HEK293 (cell line): ENCODE measurements at regions of chr11 and their contacts with region 1.

Region 1: GRCh38 chr11:73350908-73351636 is 25.1 kb upstream of the RELT start:
- H3K4me3 ChIP-seq: no peak overlapping the region
- H3K27ac ChIP-seq: no peak overlapping the region
- H3K4me1 ChIP-seq: no peaks in the 10 kb centered on the region
- CTCF ChIP-seq: peak; percentile 60

Region 2: DNA sequence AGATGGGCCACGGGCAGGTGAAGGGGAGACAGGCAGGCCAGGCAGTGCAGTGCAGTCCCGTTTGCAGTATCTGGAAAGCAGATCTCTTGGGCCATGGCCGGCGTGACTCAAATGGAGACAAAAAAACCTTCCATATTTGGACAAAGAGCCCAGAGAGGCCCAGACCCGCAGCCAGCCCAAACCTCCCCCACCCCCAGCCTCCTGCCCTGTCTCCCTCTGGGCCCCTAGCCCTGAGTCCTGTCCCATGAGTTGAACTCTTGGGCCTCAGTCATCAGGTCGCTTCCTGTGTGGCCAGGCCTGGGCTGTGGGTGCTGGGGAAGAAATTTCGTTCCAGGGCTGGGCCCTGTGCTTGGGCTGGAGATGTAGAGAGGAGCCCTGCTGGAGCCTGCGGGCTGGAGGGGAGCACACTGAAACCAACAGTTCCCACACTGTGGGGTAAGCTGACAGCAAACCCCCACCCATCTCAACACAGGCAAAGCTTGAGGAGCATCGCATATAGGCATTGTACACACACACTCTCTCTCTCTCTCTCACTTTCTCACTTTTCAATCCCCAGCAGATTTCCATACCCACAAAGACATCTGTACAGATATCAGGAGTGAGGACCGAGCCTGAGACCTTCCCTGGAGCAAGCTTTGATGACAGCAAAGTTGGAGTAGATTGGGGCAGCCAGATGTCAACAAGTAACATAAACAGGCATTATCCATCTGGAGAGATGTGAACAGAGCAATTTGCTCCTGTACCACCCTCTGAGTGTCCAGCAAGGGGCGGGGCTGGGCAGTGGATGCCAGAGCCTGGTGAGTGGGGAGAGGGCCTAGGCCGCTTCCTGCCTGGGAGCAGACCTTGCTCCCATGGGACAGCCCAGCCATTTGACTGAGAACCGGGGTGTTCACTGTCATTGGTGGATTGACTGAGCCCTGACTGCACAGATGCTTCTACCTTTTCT is 25.8 kb before region 1 on chr11:
- CTCF ChIA-PET with region 1: interaction called, 16 read pairs
- POLR2A ChIA-PET with region 1: no interaction called
- H3K4me3 ChIP-seq: no peak overlapping the region
- H3K27ac ChIP-seq: no peak overlapping the region
- H3K4me1 ChIP-seq: peaks cover 5% of the 10 kb centered on the region; the same call in 1 of the 2 replicates
- CTCF ChIP-seq: no peak

Region 3: DNA sequence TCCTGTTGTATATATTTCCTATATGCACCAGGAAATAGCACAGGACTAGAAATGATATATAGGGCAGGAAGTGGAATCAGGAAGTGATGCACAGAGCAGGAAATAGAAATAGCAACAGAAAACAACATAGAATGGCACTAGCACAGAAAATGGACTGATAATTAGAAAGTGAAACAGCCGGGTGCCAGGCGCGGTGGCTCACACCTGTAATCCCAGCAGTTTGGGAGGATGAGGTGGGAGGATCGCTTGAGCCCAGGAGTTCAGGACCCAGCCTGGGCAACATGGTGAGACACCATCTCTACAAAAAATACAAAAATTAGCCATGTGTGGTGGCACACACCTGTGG is 15.2 kb after region 1 on chr11:
- CTCF ChIA-PET with region 1: interaction called, 50 read pairs
- POLR2A ChIA-PET with region 1: no interaction called
- H3K4me3 ChIP-seq: no peak overlapping the region
- H3K27ac ChIP-seq: no peak overlapping the region
- H3K4me1 ChIP-seq: no peaks in the 10 kb centered on the region
- CTCF ChIP-seq: no peak

Region 4: GRCh38 chr11:73384872-73385689 is 34.0 kb after region 1 on chr11:
- CTCF ChIA-PET with region 1: interaction called, 61 read pairs
- POLR2A ChIA-PET with region 1: no interaction called
- H3K4me3 ChIP-seq: no peak overlapping the region
- H3K27ac ChIP-seq: 0 out of 2 replicates have a peak overlapping the region, but pooled peaks have one; percentile 24
- H3K4me1 ChIP-seq: peaks cover 11% of the 10 kb centered on the region; the same call in 1 of the 2 replicates
- CTCF ChIP-seq: no peak

Region 5: DNA sequence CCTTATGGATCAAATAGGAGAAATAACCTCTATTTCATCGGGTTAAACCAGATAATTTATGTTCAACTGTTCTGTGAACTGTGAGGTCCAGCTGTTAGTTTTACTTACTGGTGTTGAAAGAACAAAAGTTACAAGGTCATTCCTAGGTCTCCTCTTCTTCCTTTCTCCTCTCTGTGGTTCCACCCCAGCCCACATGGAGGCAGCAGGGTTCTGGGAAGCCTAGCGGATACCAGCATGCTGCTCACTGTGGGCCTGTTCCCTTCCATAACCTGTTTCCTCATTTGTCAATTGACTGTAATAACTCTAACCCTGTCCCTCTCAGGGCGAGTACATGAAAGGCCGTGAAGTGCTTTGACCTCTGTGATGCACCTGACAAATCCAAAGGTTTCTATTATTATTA is 53.0 kb after region 1 on chr11:
- CTCF ChIA-PET with region 1: interaction called, 45 read pairs
- POLR2A ChIA-PET with region 1: no interaction called
- H3K4me3 ChIP-seq: no peak overlapping the region
- H3K27ac ChIP-seq: no peak overlapping the region
- H3K4me1 ChIP-seq: no peaks in the 10 kb centered on the region
- CTCF ChIP-seq: peak; percentile 49; the same call in 1 of the 2 replicates